ENCODE measurements at regions of chr7 and their contacts with region 1.

Region 1: DNA sequence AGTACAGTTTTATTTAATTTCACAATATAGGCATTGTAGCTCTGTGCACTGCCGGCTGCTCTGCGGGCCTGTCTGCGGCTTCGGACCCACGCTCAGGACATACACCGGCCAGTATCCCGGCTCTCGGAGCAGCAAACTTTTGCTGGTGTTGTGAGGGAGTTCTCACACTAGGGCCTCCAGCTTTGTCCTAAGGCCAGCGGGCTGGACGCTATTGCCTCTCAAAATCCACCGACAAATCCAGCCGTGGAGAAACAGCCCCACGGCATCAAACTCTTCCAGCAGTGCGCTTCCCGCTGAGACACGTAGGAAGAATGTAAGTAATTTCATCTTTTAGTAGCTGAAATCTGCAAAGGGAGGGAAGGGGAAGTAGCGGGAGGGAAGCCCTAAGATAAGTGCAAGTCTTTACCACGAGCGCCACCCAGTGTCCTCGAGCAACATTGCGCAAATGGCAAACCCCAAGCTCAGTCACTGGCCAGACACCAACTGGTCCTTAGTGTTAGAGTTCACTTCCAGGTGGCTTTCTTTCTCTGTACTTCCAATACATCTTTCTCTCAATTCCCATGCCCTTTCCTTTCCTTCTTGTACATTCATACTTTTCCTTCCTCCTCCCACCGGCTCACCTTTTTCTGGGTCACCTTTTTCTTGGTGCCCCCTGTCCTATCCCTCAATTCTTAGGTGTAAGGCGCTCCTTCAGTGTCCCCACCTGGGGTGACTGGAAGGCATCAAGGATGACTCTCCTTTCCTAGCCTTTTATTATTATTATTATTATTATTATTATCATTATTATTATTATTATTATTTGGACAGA is 3.0 kb upstream of the DLX5 start:
- DNase-seq: peak; percentile 51 to 67
- H3K4me3 ChIP-seq: no peak overlapping the region
- H3K27ac ChIP-seq: no peak overlapping the region
- H3K4me1 ChIP-seq: peaks cover 4% of the 10 kb centered on the region; the same call in 1 of the 2 replicates
- H3K27me3 ChIP-seq: no peaks in the 10 kb centered on the region; the same call in 1 of the 2 replicates
- CTCF ChIP-seq: peak; percentile 90

Region 2: DNA sequence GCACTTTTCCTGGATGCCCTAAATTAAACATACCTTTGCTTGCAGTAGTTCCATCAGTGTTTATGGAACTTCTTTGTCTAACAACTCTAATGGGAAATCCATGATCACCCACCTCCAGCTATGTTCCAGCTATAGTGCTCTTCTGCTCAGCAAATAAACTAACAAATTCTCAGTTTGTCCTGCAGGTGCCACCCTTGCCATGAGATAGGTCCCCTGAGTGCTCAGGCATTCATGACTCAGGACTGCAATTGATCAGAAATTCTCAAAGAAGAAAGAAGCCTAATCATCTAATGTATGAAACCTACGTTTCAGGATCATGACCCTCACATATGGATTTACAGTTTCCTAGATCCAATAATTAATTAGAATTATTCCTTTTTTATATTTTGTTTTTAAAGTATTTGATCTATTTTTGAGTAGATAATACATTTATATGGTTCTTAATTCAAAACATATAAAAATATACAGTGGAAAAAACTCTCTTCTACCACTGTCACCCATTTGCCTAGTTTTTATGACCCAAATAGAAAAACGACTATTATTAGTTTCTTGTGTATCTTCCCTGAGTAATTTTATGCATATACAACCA is 1303.9 kb before region 1 on chr7:
- CTCF ChIA-PET with region 1: no interaction called
- POLR2A ChIA-PET with region 1: no interaction called
- intact Hi-C with region 1: loop called (anchors 5 kb)
- DNase-seq: peak in 1 of 2 experiments; percentile 39
- H3K4me3 ChIP-seq: no peak overlapping the region
- H3K27ac ChIP-seq: no peak overlapping the region
- H3K4me1 ChIP-seq: no peaks in the 10 kb centered on the region
- H3K27me3 ChIP-seq: no peaks in the 10 kb centered on the region; the same call in 1 of the 2 replicates
- CTCF ChIP-seq: peak; percentile 74

Region 3: GRCh38 chr7:96067321-96067720 is 960.3 kb before region 1 on chr7:
- CTCF ChIA-PET with region 1: no interaction called
- POLR2A ChIA-PET with region 1: no interaction called
- intact Hi-C with region 1: loop called (anchors 2 kb)
- DNase-seq: peak; percentile 22 to 85
- H3K4me3 ChIP-seq: 0 out of 2 replicates have a peak overlapping the region, but pooled peaks have one; percentile 13
- H3K27ac ChIP-seq: peak overlapping the region; percentile 54
- H3K4me1 ChIP-seq: peaks cover 40% of the 10 kb centered on the region
- H3K27me3 ChIP-seq: no peaks in the 10 kb centered on the region
- CTCF ChIP-seq: no peak

Region 4: DNA sequence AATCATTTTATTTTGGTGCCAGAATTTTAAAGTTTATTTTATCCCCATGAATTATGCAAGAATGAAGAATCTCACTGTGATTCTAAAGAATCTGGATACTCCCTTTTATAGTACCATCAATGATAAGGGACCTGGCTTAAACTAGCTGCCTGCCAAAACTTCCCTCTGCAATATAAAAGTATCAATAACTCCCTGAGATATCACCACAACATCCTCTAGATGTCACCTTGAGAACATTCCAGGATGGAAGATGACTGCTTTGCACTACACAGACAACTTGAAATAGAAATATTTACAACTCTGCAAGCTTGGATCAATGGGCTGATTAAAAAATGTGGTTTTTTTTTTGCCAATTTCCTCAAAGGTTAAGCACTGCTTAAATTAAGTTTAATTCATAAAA is 847.8 kb before region 1 on chr7:
- CTCF ChIA-PET with region 1: no interaction called
- POLR2A ChIA-PET with region 1: no interaction called
- intact Hi-C with region 1: loop called (anchors 2 kb)
- DNase-seq: no peak
- H3K4me3 ChIP-seq: no peak overlapping the region
- H3K27ac ChIP-seq: no peak overlapping the region
- H3K4me1 ChIP-seq: peaks cover 10% of the 10 kb centered on the region
- H3K27me3 ChIP-seq: no peaks in the 10 kb centered on the region
- CTCF ChIP-seq: no peak; the same call in 1 of the 2 replicates

Region 5: DNA sequence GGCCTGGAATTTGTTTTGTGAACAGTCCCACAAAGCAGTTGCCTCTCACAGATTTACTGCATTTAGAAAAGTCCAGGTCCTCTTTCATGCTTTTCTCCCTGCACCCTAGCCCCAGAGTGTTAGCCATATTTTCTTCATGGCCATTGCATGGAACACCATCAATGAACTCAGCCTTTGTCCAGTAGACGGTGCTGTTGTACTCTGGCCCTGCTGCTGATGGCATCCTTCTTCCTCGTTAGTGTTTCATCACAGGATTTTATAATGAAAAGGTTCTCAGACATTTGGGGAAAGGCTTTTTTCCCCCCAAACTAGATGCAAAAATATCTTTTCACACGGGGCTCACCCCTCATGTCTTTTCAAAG is 612.7 kb before region 1 on chr7:
- CTCF ChIA-PET with region 1: interaction called, 5 read pairs
- POLR2A ChIA-PET with region 1: no interaction called
- intact Hi-C with region 1: loop called (anchors 1 kb)
- DNase-seq: peak in 1 of 2 experiments; percentile 43
- H3K4me3 ChIP-seq: no peak overlapping the region
- H3K27ac ChIP-seq: no peak overlapping the region
- H3K4me1 ChIP-seq: peaks cover 10% of the 10 kb centered on the region
- H3K27me3 ChIP-seq: no peaks in the 10 kb centered on the region
- CTCF ChIP-seq: peak; percentile 85

Region 6: GRCh38 chr7:97064967-97065587 is 37.4 kb after region 1 on chr7:
- CTCF ChIA-PET with region 1: no interaction called
- POLR2A ChIA-PET with region 1: no interaction called
- intact Hi-C with region 1: no loop called
- DNase-seq: peak; percentile 10 to 39
- H3K4me3 ChIP-seq: no peak overlapping the region
- H3K27ac ChIP-seq: no peak overlapping the region
- H3K4me1 ChIP-seq: no peaks in the 10 kb centered on the region
- H3K27me3 ChIP-seq: no peaks in the 10 kb centered on the region
- CTCF ChIP-seq: peak; percentile 77